H1 (cell line): ENCODE measurements at regions of chr20 and their contacts with region 1.

Region 1: GRCh38 chr20:54103067-54103761 is 32.8 kb upstream of the BCAS1 start:
- DNase-seq: peak; percentile 41 to 95
- H3K4me3 ChIP-seq: no peak overlapping the region
- H3K27ac ChIP-seq: no peak overlapping the region
- H3K4me1 ChIP-seq: no peaks in the 10 kb centered on the region
- H3K27me3 ChIP-seq: peaks cover 0 to 1% (median 0%) of the 10 kb centered on the region in 4 experiments; a peak in 1 of 7 replicates
- CTCF ChIP-seq: peak; percentile 82 to 91 (median 85)
- EP300 ChIP-seq: no peak
- POLR2A ChIP-seq: no peak
- RAD21 ChIP-seq: peak; percentile 64 to 72

Region 2: GRCh38 chr20:54115151-54115854 is 12.1 kb after region 1 on chr20:
- CTCF ChIA-PET with region 1: interaction called, 30 read pairs
- POLR2A ChIA-PET with region 1: no interaction called
- DNase-seq: no peak
- H3K4me3 ChIP-seq: no peak overlapping the region
- H3K27ac ChIP-seq: no peak overlapping the region
- H3K4me1 ChIP-seq: no peaks in the 10 kb centered on the region
- H3K27me3 ChIP-seq: no peaks in the 10 kb centered on the region
- CTCF ChIP-seq: no peak
- EP300 ChIP-seq: no peak
- POLR2A ChIP-seq: no peak
- RAD21 ChIP-seq: no peak

Region 3: DNA sequence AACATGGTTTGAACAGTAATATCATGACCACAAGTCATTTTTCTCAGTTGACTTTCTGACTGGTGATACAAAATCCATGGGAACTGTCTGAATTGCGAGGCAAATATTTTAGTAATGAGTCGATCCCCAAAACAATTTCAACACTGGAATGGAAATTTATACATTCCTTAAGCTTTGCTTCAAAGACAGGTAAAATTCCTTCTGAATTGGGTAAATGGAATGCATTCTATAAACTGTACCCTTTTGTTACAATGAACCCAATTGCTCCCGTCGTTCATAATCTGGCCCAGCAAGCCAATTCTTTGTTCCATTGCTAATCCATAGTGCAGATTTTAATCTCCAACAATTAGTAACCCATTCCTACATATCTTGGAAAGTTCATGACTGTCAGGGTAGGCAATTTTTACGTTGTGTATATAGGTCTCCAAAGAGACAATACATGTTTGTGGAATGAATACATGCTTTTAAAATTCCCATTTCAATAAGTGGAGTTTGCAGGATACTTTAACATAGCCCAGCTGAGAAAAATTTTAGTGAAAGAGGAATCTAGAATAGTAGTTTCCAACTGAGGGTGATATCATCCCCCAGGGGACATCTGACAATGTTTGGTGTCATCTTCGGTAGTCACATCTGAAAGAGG is 37.8 kb after region 1 on chr20:
- CTCF ChIA-PET with region 1: interaction called, 24 read pairs
- POLR2A ChIA-PET with region 1: no interaction called
- DNase-seq: no peak
- H3K4me3 ChIP-seq: no peak overlapping the region
- H3K27ac ChIP-seq: no peak overlapping the region
- H3K4me1 ChIP-seq: no peaks in the 10 kb centered on the region
- H3K27me3 ChIP-seq: no peaks in the 10 kb centered on the region; a peak in 1 of 7 replicates
- CTCF ChIP-seq: no peak
- EP300 ChIP-seq: no peak
- POLR2A ChIP-seq: no peak
- RAD21 ChIP-seq: no peak

Region 4: DNA sequence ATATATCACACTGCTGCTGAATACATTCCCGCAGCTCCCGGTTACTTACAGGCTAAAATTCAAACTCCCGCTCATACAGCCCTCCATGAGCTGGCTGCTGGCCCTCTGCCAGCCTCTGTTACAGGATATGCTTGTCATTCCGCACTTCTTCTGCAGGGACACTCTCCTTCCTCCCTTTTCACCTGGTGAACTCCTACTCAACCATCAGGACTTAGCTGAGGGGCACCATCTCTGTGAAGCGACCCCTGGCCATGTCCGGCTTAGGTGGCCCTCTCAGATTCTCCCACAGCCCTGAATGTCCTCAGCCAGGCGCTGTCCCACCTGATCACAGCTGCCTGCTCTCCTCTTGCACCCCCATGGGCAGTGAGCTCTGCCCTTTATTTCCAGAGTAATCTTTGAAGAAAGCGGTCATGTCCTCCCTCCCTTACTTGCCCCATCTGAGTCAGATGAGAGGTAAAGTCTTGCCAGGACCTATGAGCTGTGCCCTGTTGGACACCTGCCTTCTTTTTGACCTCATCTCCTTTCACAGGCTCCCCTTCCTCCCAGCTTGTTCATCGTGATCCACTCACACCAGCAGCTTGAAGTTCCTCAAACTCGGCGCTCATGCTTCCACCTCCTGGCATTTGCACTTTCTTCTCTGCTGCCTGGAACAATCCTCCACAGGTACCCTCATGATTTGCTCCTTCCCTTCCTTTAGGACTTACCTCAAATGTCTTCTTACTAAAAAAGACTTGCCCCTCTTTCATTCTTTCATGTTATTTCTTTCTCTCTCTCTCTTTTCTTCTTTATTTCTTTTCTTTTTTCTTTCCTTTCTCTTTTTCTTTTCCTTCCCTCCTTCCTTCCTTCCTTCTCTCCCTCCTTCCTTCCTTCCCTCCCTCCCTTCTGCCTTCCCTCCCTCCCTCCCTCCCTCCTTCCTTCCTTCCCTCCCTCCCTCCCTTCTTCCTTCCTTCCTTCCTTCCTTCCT is 65.0 kb after region 1 on chr20:
- CTCF ChIA-PET with region 1: interaction called, 24 read pairs
- POLR2A ChIA-PET with region 1: no interaction called
- DNase-seq: no peak
- H3K4me3 ChIP-seq: no peak overlapping the region
- H3K27ac ChIP-seq: no peak overlapping the region
- H3K4me1 ChIP-seq: peaks cover 0 to 8% (median 1%) of the 10 kb centered on the region in 4 experiments; a peak in 4 of 7 replicates
- H3K27me3 ChIP-seq: peaks cover 14 to 30% (median 27%) of the 10 kb centered on the region in 4 experiments
- CTCF ChIP-seq: no peak
- EP300 ChIP-seq: no peak
- POLR2A ChIP-seq: no peak
- RAD21 ChIP-seq: no peak

Region 5: GRCh38 chr20:54179946-54180345 is 76.7 kb after region 1 on chr20:
- CTCF ChIA-PET with region 1: interaction called, 14 read pairs
- POLR2A ChIA-PET with region 1: no interaction called
- DNase-seq: no peak
- H3K4me3 ChIP-seq: no peak overlapping the region
- H3K27ac ChIP-seq: no peak overlapping the region
- H3K4me1 ChIP-seq: peaks cover 0 to under 1% (median 0%) of the 10 kb centered on the region in 4 experiments; a peak in 1 of 7 replicates
- H3K27me3 ChIP-seq: peaks cover 2 to 9% (median 7%) of the 10 kb centered on the region in 4 experiments
- CTCF ChIP-seq: no peak
- EP300 ChIP-seq: no peak
- POLR2A ChIP-seq: no peak
- RAD21 ChIP-seq: no peak

Region 6: GRCh38 chr20:54207743-54208547 is 104.7 kb after region 1 on chr20 and contains the start of gene PFDN4:
- CTCF ChIA-PET with region 1: interaction called, 591 read pairs
- POLR2A ChIA-PET with region 1: interaction called, 3 read pairs
- DNase-seq: peak; percentile 41 to 91
- H3K4me3 ChIP-seq: peak within 1 kb of the TSS; percentile 69 to 94 (median 91)
- H3K27ac ChIP-seq: peak within 1 kb of the TSS; percentile 100
- H3K4me1 ChIP-seq: peaks cover 0 to 2% (median 0%) of the 10 kb centered on the region in 4 experiments; a peak in 2 of 7 replicates
- H3K27me3 ChIP-seq: no peaks in the 10 kb centered on the region
- CTCF ChIP-seq: peak; percentile 61 to 72 (median 65)
- EP300 ChIP-seq: peak in 1 of 2 experiments; percentile 99; a peak in 2 of 3 replicates
- POLR2A ChIP-seq: peak; percentile 44 to 46
- RAD21 ChIP-seq: peak; percentile 27 to 46; a peak in 3 of 4 replicates
- total RNA-seq, gene PFDN4: 85.5 and 96.8 TPM in 2 replicates